Heart left ventricle (tissue), 16 donors: ENCODE measurements at regions of chr3 and their contacts with region 1.

Region 1: GRCh38 chr3:53219895-53220483 is 35.8 kb downstream of the TKT start:
- DNase-seq: peak; percentile 70 to 89 (median 82)
- ATAC-seq: peak; percentile 53 to 87 (median 86)
- H3K4me3 ChIP-seq: no peak overlapping the region
- H3K27ac ChIP-seq: no peak overlapping the region
- H3K4me1 ChIP-seq: peaks cover 0 to 23% (median 0%) of the 10 kb centered on the region in 12 donors
- H3K27me3 ChIP-seq: no peaks in the 10 kb centered on the region
- CTCF ChIP-seq: peak; percentile 76 to 95 (median 86)
- POLR2A ChIP-seq: no peak

Region 2: GRCh38 chr3:53287131-53287629 is 67.2 kb after region 1 on chr3:
- intact Hi-C with region 1: loop called in 1 of 10 experiments (anchors 5 kb)
- DNase-seq: no peak
- ATAC-seq: no peak
- H3K4me3 ChIP-seq: no peak overlapping the region
- H3K27ac ChIP-seq: peak overlapping the region in 2 of 12 donors; percentile 9 to 65
- H3K4me1 ChIP-seq: peaks cover 0 to 8% (median 0%) of the 10 kb centered on the region in 12 donors
- H3K27me3 ChIP-seq: no peaks in the 10 kb centered on the region
- CTCF ChIP-seq: no peak
- POLR2A ChIP-seq: no peak

Region 3: DNA sequence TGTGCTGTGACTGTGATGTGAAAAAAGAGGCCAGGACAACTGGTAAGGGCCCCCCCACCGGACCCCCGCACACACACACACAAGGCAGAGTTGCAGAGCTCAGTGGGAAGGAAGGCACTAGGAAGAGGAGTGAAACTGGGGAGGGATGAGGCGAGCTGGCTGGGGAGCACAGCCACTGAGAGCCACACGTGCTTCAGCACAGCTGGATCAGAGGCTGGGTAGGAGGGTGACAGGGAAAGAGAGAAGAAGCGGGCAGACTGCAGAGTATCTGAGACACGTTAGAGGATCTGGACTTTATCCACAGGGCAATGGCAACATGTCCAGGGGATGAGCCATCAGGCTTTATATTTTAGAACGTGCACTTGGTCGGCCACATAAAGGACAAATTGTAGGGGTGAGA is 73.9 kb after region 1 on chr3:
- intact Hi-C with region 1: loop called in 2 of 10 experiments (anchors 2 to 5 kb)
- DNase-seq: no peak
- ATAC-seq: peak in 3 of 4 donors; percentile 61 to 75 (median 66)
- H3K4me3 ChIP-seq: no peak overlapping the region
- H3K27ac ChIP-seq: no peak overlapping the region
- H3K4me1 ChIP-seq: peaks cover 0 to 22% (median 0%) of the 10 kb centered on the region in 12 donors
- H3K27me3 ChIP-seq: no peaks in the 10 kb centered on the region
- CTCF ChIP-seq: no peak
- POLR2A ChIP-seq: no peak